ENCODE measurements at regions of chr5 and their contacts with region 1.

Region 1: DNA sequence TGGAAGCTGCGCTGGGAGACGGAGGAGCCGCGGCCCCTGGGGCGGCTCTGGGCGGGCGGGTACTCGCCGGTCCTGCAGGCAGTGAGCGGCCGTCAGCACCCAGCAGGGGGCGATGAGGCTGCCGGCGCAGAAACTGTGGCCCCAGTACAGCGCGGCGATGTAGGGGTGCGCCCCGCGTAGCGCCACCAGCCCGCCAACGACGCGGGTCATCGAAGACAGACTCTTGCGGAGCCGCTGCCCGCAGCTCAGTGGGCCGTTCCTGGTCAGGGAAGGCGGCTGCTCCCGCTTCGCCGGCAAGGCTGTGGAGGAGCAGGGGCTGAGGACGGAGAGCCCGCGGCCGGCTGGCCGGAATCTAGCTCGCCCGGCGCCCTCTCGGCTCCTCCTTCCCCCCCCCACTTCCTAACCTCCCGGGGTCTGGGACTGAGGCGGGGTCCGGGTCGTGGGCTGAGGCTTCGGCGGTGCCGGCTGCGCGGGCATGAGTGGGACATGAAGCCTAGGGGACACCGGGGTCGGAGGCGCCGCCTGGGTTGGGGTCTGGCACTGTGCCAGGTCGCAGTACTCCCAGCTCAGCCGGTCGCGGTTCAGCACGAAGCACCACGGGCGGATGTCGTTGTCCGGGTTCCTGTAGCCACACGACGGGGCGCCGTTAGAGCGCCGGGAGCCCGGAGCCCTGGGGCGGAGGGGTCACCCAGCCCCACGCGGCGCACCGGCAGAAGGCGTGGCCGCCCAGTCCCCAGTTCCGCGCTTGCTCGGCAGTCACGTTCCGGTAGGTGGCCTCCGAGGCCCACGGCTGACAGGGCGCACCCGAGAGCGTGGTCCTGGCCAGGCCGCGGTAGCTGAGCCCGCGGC is 3.6 kb upstream of the PFN3 start:
- DNase-seq: peak; percentile 91
- ATAC-seq: peak; percentile 84
- H3K4me3 Mint-ChIP-seq: peak overlapping the region; percentile 72
- H3K27ac Mint-ChIP-seq: peak overlapping the region; percentile 42
- H3K4me1 Mint-ChIP-seq: peaks cover 27% of the 10 kb centered on the region
- H3K27me3 Mint-ChIP-seq: peaks cover 14% of the 10 kb centered on the region

Region 2: GRCh38 chr5:176817841-176818377 is 586.1 kb before region 1 on chr5:
- CTCF ChIA-PET with region 1: no interaction called
- POLR2A ChIA-PET with region 1: no interaction called
- intact Hi-C with region 1: no loop called
- DNase-seq: peak; percentile 53
- ATAC-seq: peak; percentile 54
- H3K4me3 Mint-ChIP-seq: no peak overlapping the region
- H3K27ac Mint-ChIP-seq: no peak overlapping the region
- H3K4me1 Mint-ChIP-seq: peaks cover 5% of the 10 kb centered on the region
- H3K27me3 Mint-ChIP-seq: peaks cover 60% of the 10 kb centered on the region

Region 3: DNA sequence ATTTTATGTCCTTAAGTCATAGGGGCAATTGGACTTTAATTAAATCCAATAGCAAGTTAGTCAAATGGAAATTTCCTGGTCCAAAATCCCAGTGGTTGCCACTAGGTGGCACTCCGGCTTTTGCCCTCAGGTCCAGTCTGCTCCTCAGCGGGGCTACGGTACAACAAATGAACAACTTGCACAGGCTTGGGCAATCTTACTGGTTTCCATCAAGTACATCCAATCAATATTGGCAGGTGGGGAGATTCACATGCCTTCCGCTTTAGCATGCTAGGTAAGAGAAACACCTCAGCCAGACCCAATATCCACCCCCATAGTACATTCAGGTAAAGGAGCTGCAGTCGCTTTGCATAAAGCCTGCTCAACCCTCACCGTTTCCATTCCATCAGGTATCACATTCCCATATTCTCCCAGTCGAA is 86.0 kb before region 1 on chr5:
- CTCF ChIA-PET with region 1: interaction called, 47 read pairs
- POLR2A ChIA-PET with region 1: no interaction called
- intact Hi-C with region 1: loop called (anchors 1 to 5 kb)
- DNase-seq: peak; percentile 87
- ATAC-seq: peak; percentile 75
- H3K4me3 Mint-ChIP-seq: no peak overlapping the region
- H3K27ac Mint-ChIP-seq: no peak overlapping the region
- H3K4me1 Mint-ChIP-seq: peaks cover 19% of the 10 kb centered on the region
- H3K27me3 Mint-ChIP-seq: no peaks in the 10 kb centered on the region

Region 4: GRCh38 chr5:177357459-177358351 is 46.3 kb before region 1 on chr5 and contains the start of gene RGS14:
- CTCF ChIA-PET with region 1: interaction called, 34 read pairs
- POLR2A ChIA-PET with region 1: no interaction called
- intact Hi-C with region 1: no loop called
- DNase-seq: peak; percentile 74
- ATAC-seq: peak; percentile 90
- H3K4me3 Mint-ChIP-seq: peak within 1 kb of the TSS; percentile 82
- H3K27ac Mint-ChIP-seq: peak within 1 kb of the TSS; percentile 79
- H3K4me1 Mint-ChIP-seq: peaks cover 68% of the 10 kb centered on the region
- H3K27me3 Mint-ChIP-seq: no peaks in the 10 kb centered on the region
- total RNA-seq, gene RGS14: 43.8 to 62.0 TPM

Region 5: DNA sequence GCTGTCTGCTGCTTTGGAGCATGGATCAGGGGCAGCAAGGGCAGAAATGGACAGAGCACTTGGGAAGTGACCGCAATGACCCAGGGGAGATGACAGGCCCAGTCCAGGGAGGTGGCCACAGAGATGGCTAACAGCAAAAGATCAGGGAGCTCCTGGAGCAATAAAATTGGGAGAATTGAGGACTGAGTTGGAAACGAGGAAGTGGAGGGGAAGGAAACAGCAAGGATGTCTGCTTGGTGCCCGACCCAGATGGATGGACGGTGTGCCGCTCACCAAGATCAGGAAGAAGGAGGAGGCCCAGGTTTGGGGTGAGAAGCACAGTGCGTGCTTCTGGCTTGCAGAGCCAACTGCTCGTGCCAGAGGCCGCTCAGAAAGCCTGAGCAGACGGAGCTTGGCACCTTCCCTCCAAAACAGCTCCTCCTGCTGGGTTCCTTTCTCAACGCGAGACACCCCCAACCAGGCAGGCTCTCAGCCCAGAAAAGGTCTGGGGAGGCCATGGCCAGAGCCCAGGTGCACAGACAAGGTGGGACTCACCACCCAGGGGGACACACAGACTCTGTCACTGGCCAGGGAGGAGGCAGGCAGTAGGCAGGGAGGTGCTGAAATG is 21.5 kb before region 1 on chr5:
- CTCF ChIA-PET with region 1: interaction called, 195 read pairs
- POLR2A ChIA-PET with region 1: no interaction called
- intact Hi-C with region 1: no loop called
- DNase-seq: peak; percentile 64
- ATAC-seq: peak; percentile 34
- H3K4me3 Mint-ChIP-seq: no peak overlapping the region
- H3K27ac Mint-ChIP-seq: peak overlapping the region; percentile 26
- H3K4me1 Mint-ChIP-seq: peaks cover 31% of the 10 kb centered on the region
- H3K27me3 Mint-ChIP-seq: peaks cover 1% of the 10 kb centered on the region

Region 6: GRCh38 chr5:177446200-177447065 is 42.4 kb after region 1 on chr5 and contains the start of gene PRR7:
- CTCF ChIA-PET with region 1: interaction called, 188 read pairs
- POLR2A ChIA-PET with region 1: interaction called, 19 read pairs
- intact Hi-C with region 1: loop called in 1 of 2 experiments (anchors 2 kb)
- DNase-seq: peak; percentile 83
- ATAC-seq: peak; percentile 54
- H3K4me3 Mint-ChIP-seq: peak within 1 kb of the TSS; percentile 51
- H3K27ac Mint-ChIP-seq: peak within 1 kb of the TSS; percentile 89
- H3K4me1 Mint-ChIP-seq: peaks cover 43% of the 10 kb centered on the region
- H3K27me3 Mint-ChIP-seq: no peaks in the 10 kb centered on the region
- total RNA-seq, gene PRR7: 12.3 to 13.0 TPM

Region 7: GRCh38 chr5:177516604-177517568 is 112.9 kb after region 1 on chr5 and contains the start of gene DDX41:
- CTCF ChIA-PET with region 1: interaction called, 4 read pairs
- POLR2A ChIA-PET with region 1: no interaction called
- intact Hi-C with region 1: loop called in 1 of 2 experiments (anchors 5 kb)
- DNase-seq: peak; percentile 98
- ATAC-seq: peak; percentile 91
- H3K4me3 Mint-ChIP-seq: peak within 1 kb of the TSS; percentile 98
- H3K27ac Mint-ChIP-seq: peak within 1 kb of the TSS; percentile 96
- H3K4me1 Mint-ChIP-seq: peaks cover 48% of the 10 kb centered on the region
- H3K27me3 Mint-ChIP-seq: no peaks in the 10 kb centered on the region
- total RNA-seq, gene DDX41: 192 to 197 TPM

Measured in activated CD4-positive, alpha-beta T cell treated with anti-CD3 and anti-CD28 coated beads for 36 hours (primary cell).